Activated naive CD4-positive, alpha-beta T cell treated with anti-CD3 and anti-CD28 coated beads, Interleukin-2, amount 10 ng/mL, durations not matched to agents 7 days and 5 days (primary cell): ENCODE measurements at regions of chr1 and their contacts with region 1.

Region 1: GRCh38 chr1:156689035-156689952 is 12.1 kb upstream of the NES start:
- DNase-seq: peak; percentile 84
- H3K4me3 Mint-ChIP-seq: no peak overlapping the region
- H3K27ac Mint-ChIP-seq: no peak overlapping the region
- H3K4me1 Mint-ChIP-seq: peaks cover 34% of the 10 kb centered on the region
- H3K27me3 Mint-ChIP-seq: peaks cover 81% of the 10 kb centered on the region

Region 2: DNA sequence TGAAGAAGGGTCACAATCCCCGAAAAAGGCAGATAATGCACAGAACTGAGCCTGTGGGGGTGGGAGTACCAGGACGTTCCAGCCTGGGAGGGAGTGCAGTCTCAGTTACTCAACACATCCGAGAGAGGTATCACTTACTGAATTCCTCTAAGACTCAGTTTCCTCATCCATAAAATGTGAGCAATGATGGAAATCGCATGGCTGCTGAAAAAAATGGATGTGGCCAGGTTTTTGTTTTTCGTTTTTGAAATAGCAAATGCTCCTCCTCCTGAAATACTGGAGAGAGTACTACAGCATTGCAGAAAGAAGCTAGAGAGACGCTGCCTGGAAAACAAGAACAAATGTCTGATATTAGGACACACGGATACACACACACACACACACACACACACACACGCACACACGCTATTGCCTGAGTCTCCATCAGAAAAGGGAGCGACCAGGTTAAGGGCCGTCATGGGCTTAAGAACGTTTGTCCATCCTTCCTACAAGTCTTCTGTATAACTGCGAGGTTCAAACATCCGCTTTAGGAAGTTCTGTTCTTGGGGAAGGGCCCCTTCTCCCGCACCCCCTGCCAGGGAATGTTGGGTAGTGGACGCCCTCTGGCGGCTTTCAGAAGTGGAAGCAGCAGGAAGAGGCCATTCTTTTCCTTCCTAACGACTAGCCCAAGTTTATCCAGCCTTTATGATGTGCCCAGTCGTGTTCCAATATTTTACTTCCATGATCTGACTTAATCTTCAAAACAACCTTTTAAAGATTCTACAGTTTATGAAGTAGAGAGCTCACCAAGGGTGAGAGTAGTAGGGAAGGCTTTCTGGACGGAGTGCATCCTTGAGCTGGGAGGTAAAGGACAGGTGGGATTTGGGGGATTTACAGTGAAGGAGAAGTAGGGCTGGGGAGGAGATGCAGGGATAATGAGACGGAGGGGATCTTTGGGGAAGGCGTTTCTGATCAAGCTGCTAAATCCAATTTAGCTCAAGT is 11.4 kb before region 1 on chr1:
- CTCF ChIA-PET with region 1: interaction called, 29 read pairs
- DNase-seq: peak; percentile 49
- H3K4me3 Mint-ChIP-seq: no peak overlapping the region
- H3K27ac Mint-ChIP-seq: no peak overlapping the region
- H3K4me1 Mint-ChIP-seq: peaks cover 9% of the 10 kb centered on the region
- H3K27me3 Mint-ChIP-seq: peaks cover 98% of the 10 kb centered on the region

Region 3: GRCh38 chr1:156705918-156706656 is 16.8 kb after region 1 on chr1:
- CTCF ChIA-PET with region 1: interaction called, 237 read pairs
- DNase-seq: peak; percentile 78
- H3K4me3 Mint-ChIP-seq: peak overlapping the region; percentile 77
- H3K27ac Mint-ChIP-seq: no peak overlapping the region
- H3K4me1 Mint-ChIP-seq: peaks cover 24% of the 10 kb centered on the region
- H3K27me3 Mint-ChIP-seq: peaks cover 72% of the 10 kb centered on the region

Region 4: GRCh38 chr1:156711011-156711817 is 21.9 kb after region 1 on chr1:
- CTCF ChIA-PET with region 1: interaction called, 237 read pairs
- DNase-seq: no peak
- H3K4me3 Mint-ChIP-seq: no peak overlapping the region
- H3K27ac Mint-ChIP-seq: no peak overlapping the region
- H3K4me1 Mint-ChIP-seq: peaks cover 14% of the 10 kb centered on the region
- H3K27me3 Mint-ChIP-seq: peaks cover 23% of the 10 kb centered on the region

Region 5: DNA sequence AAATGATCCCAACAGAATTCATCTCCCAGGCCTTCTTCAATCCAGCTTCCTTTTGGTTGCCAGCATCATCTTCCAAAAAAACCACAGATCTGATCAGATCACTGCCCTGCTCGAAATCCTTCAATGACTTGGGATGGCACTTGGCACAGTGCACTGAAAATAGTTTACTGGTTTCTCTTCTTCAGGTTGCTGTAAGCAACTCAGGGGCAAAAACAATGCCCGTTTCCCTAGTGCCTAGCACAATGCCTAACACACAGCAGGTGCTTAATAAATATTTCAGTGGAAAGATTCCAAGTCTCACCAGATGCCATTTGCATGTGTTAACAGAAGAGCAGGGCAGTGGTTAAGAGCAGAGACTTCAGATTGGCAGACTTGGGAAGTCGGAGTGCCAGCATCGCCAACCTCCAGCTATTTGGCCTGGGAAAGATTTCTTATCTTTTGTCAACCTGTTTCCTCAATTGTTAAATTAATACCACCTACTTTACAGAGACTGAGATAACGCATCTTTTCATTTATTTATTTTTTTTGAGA is 28.0 kb after region 1 on chr1:
- CTCF ChIA-PET with region 1: interaction called, 28 read pairs
- DNase-seq: no peak
- H3K4me3 Mint-ChIP-seq: no peak overlapping the region
- H3K27ac Mint-ChIP-seq: no peak overlapping the region
- H3K4me1 Mint-ChIP-seq: no peaks in the 10 kb centered on the region
- H3K27me3 Mint-ChIP-seq: no peaks in the 10 kb centered on the region

Region 6: DNA sequence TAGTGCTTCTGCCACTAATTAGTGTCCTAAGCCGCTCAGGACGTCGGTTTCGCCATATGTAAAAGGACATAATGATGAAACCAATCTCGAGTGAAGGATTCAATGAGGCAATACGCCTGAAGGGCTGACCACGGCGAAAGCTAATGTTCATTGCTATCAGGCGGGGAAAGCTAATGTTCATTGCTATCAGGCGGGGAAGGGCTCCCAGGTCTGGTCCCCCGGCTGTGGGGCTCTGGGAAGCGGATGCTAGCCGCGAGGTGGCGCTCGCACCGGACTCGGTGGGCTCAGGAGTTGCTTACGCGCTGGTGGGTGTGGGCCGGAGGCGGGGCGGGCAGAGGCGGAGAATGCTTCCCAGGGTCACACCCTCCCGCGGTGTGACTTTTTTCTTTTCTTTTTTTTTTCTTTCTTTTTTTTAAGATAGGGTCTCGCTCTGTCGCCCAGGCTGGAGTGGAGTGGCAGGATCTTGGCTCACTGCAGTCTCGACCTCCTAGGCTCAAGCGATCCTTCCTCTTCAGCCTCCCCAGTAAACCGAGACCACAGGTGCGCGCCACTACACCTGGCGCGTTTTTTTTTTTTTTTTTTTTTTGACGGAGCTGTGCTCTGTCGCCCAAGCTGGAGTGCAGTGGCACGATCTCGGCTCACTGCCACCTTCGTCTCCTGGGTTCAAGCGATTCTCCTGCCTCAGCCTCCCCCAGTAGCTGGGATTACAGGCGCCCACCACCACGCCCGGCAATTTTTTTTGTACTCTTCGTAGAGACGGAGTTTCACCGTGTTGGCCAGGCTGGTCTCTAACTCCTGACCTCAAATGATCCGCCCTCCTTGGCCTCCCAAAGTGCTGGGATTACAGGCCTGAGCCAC is 203.1 kb after region 1 on chr1:
- CTCF ChIA-PET with region 1: interaction called, 48 read pairs
- DNase-seq: peak; percentile 92
- H3K4me3 Mint-ChIP-seq: peak overlapping the region; percentile 59
- H3K27ac Mint-ChIP-seq: peak overlapping the region; percentile 66
- H3K4me1 Mint-ChIP-seq: peaks cover 27% of the 10 kb centered on the region
- H3K27me3 Mint-ChIP-seq: peaks cover 94% of the 10 kb centered on the region

Region 7: DNA sequence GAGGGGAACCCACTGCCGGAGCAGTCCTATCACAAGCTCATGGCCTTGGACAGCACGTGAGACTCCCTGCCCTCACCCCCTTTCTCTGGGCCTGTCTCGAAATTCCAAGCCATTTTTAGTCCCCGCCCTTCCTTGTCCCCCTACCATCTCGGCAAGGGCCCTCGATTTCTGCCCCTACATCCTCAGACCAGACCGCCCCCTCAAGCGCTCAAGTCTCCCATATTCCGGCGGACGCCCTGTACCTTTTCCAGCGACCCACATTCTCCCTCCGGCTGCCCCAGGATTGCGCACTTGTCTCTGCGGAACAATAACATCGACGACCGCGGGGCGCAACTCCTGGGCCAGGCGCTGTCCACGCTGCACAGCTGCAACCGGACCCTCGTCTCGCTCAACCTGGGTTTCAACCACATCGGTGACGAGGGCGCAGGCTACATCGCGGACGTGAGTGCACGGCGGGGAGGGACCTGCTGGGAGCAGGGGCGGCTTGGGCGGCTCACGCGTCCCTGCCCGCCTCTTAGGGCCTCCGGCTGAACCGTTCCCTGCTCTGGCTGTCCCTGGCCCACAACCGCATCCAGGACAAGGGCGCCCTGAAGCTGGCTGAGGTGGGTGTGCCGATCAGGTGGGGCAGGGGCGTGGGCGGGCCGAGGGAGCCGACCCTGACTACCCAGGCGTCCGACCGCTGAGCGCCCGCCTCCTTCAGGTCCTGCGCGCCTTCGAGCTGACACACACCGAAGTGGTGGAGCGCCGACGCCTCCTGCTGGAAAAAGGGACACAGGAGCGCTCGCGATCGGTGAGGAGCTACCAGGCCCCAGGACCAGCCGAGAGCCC is 238.1 kb after region 1 on chr1:
- CTCF ChIA-PET with region 1: interaction called, 26 read pairs
- DNase-seq: peak; percentile 85
- H3K4me3 Mint-ChIP-seq: no peak overlapping the region
- H3K27ac Mint-ChIP-seq: no peak overlapping the region
- H3K4me1 Mint-ChIP-seq: peaks cover 22% of the 10 kb centered on the region
- H3K27me3 Mint-ChIP-seq: peaks cover 100% of the 10 kb centered on the region